Heart right ventricle (tissue), 16 donors: ENCODE measurements at regions of chr21 and their contacts with region 1.

Region 1: GRCh38 chr21:34345091-34345871 is 18.5 kb upstream of the KCNE2 start:
- DNase-seq: peak in 1 of 2 donors; percentile 36
- ATAC-seq: peak in 7 of 8 donors; percentile 21 to 62 (median 46)
- H3K4me3 ChIP-seq: peak overlapping the region in 1 of 10 donors; percentile 3
- H3K27ac ChIP-seq: peak overlapping the region in 9 of 10 donors; percentile 2 to 70 (median 47)
- H3K4me1 ChIP-seq: peaks cover 3 to 43% (median 10%) of the 10 kb centered on the region in 9 donors
- H3K27me3 ChIP-seq: no peaks in the 10 kb centered on the region
- CTCF ChIP-seq: no peak

Region 2: GRCh38 chr21:33924079-33924765 is 421.1 kb before region 1 on chr21:
- intact Hi-C with region 1: loop called in 9 of 10 experiments (anchors 2 to 5 kb)
- DNase-seq: peak; percentile 89 to 90
- ATAC-seq: peak; percentile 94 to 98 (median 96)
- H3K4me3 ChIP-seq: no peak overlapping the region
- H3K27ac ChIP-seq: no peak overlapping the region
- H3K4me1 ChIP-seq: peaks cover 0 to 10% (median 0%) of the 10 kb centered on the region in 9 donors
- H3K27me3 ChIP-seq: peaks cover 0 to 5% (median 0%) of the 10 kb centered on the region in 7 donors
- CTCF ChIP-seq: peak; percentile 90 to 96 (median 95)

Region 3: DNA sequence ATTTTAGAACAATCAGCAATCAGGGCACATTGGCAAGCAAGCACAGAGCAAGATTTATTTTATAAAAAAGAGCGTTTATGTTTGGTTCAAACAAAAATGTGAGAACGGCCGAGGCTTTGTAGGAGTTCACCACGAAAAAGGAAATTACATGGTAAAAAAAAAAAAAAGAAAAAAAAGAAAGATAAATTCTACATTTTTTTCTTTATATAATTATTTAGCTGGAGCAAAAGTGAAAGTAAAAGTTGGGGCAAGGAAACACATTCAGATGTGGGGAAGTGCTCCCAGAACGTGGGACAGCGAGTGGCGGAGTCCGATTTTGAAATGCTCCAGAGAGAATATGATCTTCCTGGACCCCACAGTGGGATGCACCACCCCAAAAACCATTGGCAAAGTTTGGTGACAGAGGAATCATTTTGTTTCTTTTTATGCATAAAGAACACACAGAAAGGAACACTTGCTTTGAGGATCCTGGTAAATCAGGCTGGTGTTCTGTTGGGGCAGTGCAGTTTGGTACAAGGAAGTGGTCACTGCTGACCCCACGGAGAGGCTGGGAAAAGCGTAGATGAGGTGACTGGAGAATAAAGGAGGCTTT is 413.4 kb before region 1 on chr21:
- intact Hi-C with region 1: loop called in 2 of 10 experiments (anchors 5 kb)
- DNase-seq: no peak
- ATAC-seq: peak in 7 of 8 donors; percentile 44 to 78 (median 64)
- H3K4me3 ChIP-seq: peak overlapping the region in 9 of 10 donors; percentile 16 to 57 (median 45)
- H3K27ac ChIP-seq: peak overlapping the region in 6 of 10 donors; percentile 17 to 90 (median 48)
- H3K4me1 ChIP-seq: peaks cover 0 to 20% (median 8%) of the 10 kb centered on the region in 9 donors
- H3K27me3 ChIP-seq: no peaks in the 10 kb centered on the region
- CTCF ChIP-seq: no peak

Region 4: GRCh38 chr21:34129039-34129891 is 216.0 kb before region 1 on chr21:
- intact Hi-C with region 1: loop called in 3 of 10 experiments (anchors 5 kb)
- DNase-seq: peak; percentile 41 to 79
- ATAC-seq: peak; percentile 90 to 95 (median 92)
- H3K4me3 ChIP-seq: peak overlapping the region in 7 of 10 donors; percentile 2 to 34 (median 24)
- H3K27ac ChIP-seq: peak overlapping the region; percentile 34 to 82 (median 76)
- H3K4me1 ChIP-seq: peaks cover 3 to 70% (median 62%) of the 10 kb centered on the region in 9 donors
- H3K27me3 ChIP-seq: no peaks in the 10 kb centered on the region
- CTCF ChIP-seq: peak in 8 of 9 donors; percentile 8 to 63 (median 40)

Region 5: GRCh38 chr21:34688145-34688544 is 342.9 kb after region 1 on chr21:
- intact Hi-C with region 1: no loop called
- DNase-seq: peak in 1 of 2 donors; percentile 38
- ATAC-seq: peak in 1 of 8 donors; percentile 15
- H3K4me3 ChIP-seq: no peak overlapping the region
- H3K27ac ChIP-seq: no peak overlapping the region
- H3K4me1 ChIP-seq: peaks cover 0 to 17% (median 5%) of the 10 kb centered on the region in 9 donors
- H3K27me3 ChIP-seq: peaks cover 0 to 18% (median 0%) of the 10 kb centered on the region in 7 donors
- CTCF ChIP-seq: peak in 5 of 9 donors; percentile 14 to 78 (median 57)